A549 (cell line): ENCODE measurements at regions of chr20 and their contacts with region 1.

Region 1: GRCh38 chr20:48904365-48905296 is 16.9 kb upstream of the ARFGEF2 start:
- DNase-seq: peak; percentile 66 to 70
- ATAC-seq: peak; percentile 52 to 78; a peak in 5 of 6 replicates
- H3K4me3 ChIP-seq: no peak overlapping the region
- H3K27ac ChIP-seq: peak overlapping the region; percentile 31 to 52; a peak in 3 of 6 replicates
- H3K4me1 ChIP-seq: peaks cover 8% of the 10 kb centered on the region
- CTCF ChIP-seq: peak; percentile 93
- EP300 ChIP-seq: no peak
- POLR2A ChIP-seq: no peak
- RAD21 ChIP-seq: peak; percentile 94 to 96

Region 2: DNA sequence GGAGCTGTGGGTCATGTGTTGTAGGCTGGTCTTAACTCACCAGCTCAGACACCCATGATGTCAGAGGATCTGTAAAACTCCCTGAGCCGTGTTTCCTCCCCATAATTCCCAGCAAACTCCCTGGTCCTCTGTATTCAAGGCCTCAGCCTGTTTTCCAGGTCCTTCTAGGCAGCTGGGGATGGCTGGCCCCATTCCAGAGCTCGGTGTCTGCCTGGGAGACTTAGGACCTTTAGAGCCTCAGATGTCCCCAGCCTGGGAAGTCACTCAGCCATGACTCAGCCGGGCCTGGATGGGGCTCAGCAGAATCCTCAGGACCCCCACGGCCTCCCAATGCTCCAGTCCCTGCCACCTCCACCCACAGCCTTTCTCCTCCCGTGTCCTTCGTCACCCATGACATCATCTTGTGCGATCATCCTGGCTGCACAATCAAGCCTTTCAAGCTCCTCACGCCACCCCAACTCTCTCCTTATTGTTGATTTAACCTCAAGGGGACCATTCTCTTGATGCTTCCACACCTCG is 644.3 kb before region 1 on chr20:
- CTCF ChIA-PET with region 1: no interaction called
- POLR2A ChIA-PET with region 1: no interaction called
- DNase-seq: no peak
- ATAC-seq: no peak
- H3K4me3 ChIP-seq: no peak overlapping the region
- H3K27ac ChIP-seq: no peak overlapping the region
- H3K4me1 ChIP-seq: no peaks in the 10 kb centered on the region
- CTCF ChIP-seq: no peak
- EP300 ChIP-seq: no peak
- POLR2A ChIP-seq: no peak
- RAD21 ChIP-seq: no peak

Region 3: DNA sequence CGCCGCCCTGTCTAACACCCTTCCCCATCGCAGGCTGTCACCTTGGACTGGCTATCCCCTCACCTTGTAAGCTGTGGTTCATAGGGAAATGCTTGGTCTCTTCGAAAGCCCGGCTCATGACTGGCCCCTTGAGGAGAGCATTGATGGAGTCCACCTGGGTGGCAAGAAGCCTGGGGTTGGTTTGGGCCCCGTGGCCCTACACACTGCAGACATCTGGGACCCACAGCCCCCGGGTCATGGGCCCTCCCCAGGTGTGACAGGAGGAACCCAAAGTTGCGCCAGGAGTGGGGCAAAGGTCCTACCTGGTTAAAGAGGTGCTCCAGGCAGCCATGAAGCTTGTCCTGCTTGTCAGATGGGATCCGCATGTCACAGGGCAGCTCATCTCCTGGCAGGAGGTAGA is 262.5 kb before region 1 on chr20:
- CTCF ChIA-PET with region 1: interaction called, 23 read pairs
- POLR2A ChIA-PET with region 1: no interaction called
- DNase-seq: no peak
- ATAC-seq: no peak
- H3K4me3 ChIP-seq: no peak overlapping the region
- H3K27ac ChIP-seq: no peak overlapping the region
- H3K4me1 ChIP-seq: no peaks in the 10 kb centered on the region
- CTCF ChIP-seq: no peak
- EP300 ChIP-seq: no peak
- POLR2A ChIP-seq: no peak
- RAD21 ChIP-seq: no peak

Region 4: GRCh38 chr20:48709744-48710695 is 194.6 kb before region 1 on chr20:
- CTCF ChIA-PET with region 1: interaction called, 14 read pairs
- POLR2A ChIA-PET with region 1: no interaction called
- DNase-seq: no peak
- ATAC-seq: no peak
- H3K4me3 ChIP-seq: no peak overlapping the region
- H3K27ac ChIP-seq: no peak overlapping the region
- H3K4me1 ChIP-seq: no peaks in the 10 kb centered on the region
- CTCF ChIP-seq: no peak
- EP300 ChIP-seq: no peak
- POLR2A ChIP-seq: no peak
- RAD21 ChIP-seq: no peak

Region 5: GRCh38 chr20:48812582-48813445 is 91.8 kb before region 1 on chr20:
- CTCF ChIA-PET with region 1: interaction called, 12 read pairs
- POLR2A ChIA-PET with region 1: no interaction called
- DNase-seq: no peak
- ATAC-seq: no peak
- H3K4me3 ChIP-seq: no peak overlapping the region
- H3K27ac ChIP-seq: no peak overlapping the region
- H3K4me1 ChIP-seq: no peaks in the 10 kb centered on the region
- CTCF ChIP-seq: no peak
- EP300 ChIP-seq: no peak
- POLR2A ChIP-seq: no peak
- RAD21 ChIP-seq: no peak

Region 6: DNA sequence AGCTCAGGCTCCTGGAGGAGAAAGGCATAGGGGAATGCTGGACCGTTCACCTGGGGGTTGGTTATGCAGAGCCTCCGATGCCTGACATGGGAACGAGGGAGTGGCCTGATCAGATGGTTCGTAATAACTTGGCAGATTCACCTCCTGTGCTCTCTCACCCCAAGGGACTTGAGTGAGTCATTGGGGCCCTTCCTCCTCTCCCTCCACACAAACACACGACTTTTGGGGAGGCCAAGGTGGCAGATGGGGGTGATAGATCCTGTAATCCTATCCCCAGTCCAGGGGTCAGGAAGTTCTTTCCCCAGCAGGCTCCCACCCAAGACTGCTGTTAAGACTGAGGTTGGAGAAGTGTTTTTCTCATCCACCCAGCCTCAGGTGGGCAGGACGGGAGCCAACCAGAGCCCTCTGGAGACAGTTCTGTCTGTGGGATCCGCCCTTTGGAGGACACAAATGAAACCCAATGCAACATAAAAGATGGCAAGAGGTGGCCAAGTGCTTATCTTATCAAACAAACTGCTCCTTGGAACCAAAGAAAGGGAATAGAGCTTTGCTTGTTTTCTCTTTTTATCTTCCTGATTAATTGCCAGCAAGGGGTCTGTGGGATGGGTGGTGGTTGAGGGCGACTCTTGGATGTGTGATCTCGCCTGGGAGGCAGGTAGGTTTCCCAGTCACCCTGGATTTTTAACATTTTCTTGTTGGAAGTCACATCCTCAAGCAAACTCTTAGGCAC is 28.6 kb before region 1 on chr20:
- CTCF ChIA-PET with region 1: interaction called, 35 read pairs
- POLR2A ChIA-PET with region 1: no interaction called
- DNase-seq: no peak
- ATAC-seq: peak; percentile 53 to 59; a peak in 4 of 6 replicates
- H3K4me3 ChIP-seq: no peak overlapping the region
- H3K27ac ChIP-seq: peak overlapping the region in 1 of 2 experiments; percentile 35; a peak in 2 of 6 replicates
- H3K4me1 ChIP-seq: peaks cover 24% of the 10 kb centered on the region
- CTCF ChIP-seq: no peak
- EP300 ChIP-seq: no peak
- POLR2A ChIP-seq: no peak
- RAD21 ChIP-seq: no peak